Left lung (tissue), 14 donors: ENCODE measurements at regions of chr5 and their contacts with region 1.

Region 1: DNA sequence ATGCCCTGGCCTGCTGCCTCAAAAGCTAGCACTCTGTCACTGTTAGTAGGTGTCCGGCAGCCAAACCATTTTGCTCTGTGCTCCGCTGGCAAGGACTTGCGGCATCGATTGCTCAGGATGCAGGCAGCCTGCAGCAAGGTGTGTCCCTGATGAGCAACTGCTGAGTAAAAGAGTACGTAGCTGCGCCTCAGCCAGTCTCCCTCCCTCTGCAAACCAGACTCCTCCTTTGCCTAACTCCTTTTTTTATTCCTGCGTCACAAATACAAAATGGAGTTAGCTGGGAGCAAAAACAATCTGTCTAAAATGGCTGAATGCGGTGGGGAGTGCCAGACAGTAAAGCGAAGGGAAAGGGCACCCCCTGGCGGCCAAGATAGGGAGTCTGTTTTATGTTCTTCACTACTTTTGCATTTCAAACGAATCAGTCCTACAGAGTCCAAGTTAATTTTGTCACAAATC is 61.1 kb downstream of the DIAPH1 start:
- DNase-seq: peak; percentile 69 to 93 (median 88)
- ATAC-seq: peak; percentile 66
- H3K4me3 ChIP-seq: no peak overlapping the region
- H3K27ac ChIP-seq: peak overlapping the region; percentile 82 to 88
- H3K4me1 ChIP-seq: peaks cover 17 to 39% of the 10 kb centered on the region in 2 donors
- H3K27me3 ChIP-seq: no peaks in the 10 kb centered on the region
- CTCF ChIP-seq: peak; percentile 71 to 85

Region 2: GRCh38 chr5:141272906-141273305 is 284.8 kb before region 1 on chr5:
- intact Hi-C with region 1: no loop called
- DNase-seq: no peak
- ATAC-seq: no peak
- H3K4me3 ChIP-seq: no peak overlapping the region
- H3K27ac ChIP-seq: no peak overlapping the region
- H3K4me1 ChIP-seq: no peaks in the 10 kb centered on the region
- H3K27me3 ChIP-seq: no peaks in the 10 kb centered on the region
- CTCF ChIP-seq: no peak

Region 3: DNA sequence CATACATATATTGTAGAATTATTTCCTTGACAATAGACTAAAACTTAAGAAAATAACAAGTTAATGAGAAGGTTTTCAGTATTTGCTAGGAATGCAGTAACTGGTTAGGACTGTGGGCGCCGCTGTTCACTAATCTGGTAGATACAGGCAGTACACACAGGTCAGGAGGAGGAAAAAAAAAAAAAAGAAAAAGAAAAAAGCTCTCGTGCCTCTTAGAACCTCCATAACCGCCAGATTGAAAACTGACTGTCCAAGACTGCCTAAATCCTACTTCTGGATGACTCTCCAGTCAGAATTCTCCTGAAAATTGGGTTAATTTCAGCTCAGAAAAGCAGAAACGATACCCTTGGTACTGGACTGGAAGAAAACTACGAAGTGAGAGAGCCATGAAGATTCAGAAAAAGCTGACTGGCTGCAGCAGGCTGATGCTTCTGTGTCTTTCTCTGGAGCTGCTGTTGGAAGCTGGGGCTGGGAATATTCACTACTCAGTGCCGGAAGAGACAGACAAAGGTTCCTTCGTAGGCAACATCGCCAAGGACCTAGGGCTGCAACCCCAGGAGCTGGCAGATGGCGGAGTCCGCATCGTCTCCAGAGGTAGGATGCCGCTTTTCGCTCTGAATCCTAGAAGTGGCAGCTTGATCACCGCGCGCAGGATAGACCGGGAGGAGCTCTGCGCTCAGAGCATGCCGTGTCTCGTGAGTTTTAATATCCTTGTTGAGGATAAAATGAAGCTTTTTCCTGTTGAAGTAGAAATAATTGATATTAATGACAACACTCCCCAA is 227.2 kb before region 1 on chr5 and contains the start of gene PCDHGA1:
- intact Hi-C with region 1: loop called in 1 of 2 experiments (anchors 10 kb)
- DNase-seq: no peak
- ATAC-seq: no peak
- H3K4me3 ChIP-seq: no peak within 1 kb of the TSS
- H3K27ac ChIP-seq: no peak within 1 kb of the TSS
- H3K4me1 ChIP-seq: no peaks in the 10 kb centered on the region
- H3K27me3 ChIP-seq: peaks cover 21 to 81% of the 10 kb centered on the region in 2 donors
- CTCF ChIP-seq: no peak
- polyA plus RNA-seq, gene PCDHGA1: 0.39 to 1.1 (median 0.81) TPM